GM12878 (cell line): ENCODE measurements at regions of chr19 and their contacts with region 1.

Region 1: GRCh38 chr19:14366498-14366915 is 14.7 kb upstream of the ADGRE5 start:
- DNase-seq: peak; percentile 98
- ATAC-seq: peak; percentile 63
- H3K4me3 ChIP-seq: no peak overlapping the region
- H3K27ac ChIP-seq: peak overlapping the region; percentile 36; the same call in 1 of the 2 replicates
- H3K4me1 ChIP-seq: peaks cover 59% of the 10 kb centered on the region
- H3K27me3 ChIP-seq: no peaks in the 10 kb centered on the region
- CTCF ChIP-seq: no peak
- EP300 ChIP-seq: no peak
- POLR2A ChIP-seq: peak; percentile 48; the same call in 1 of the 2 replicates
- RAD21 ChIP-seq: no peak

Region 2: DNA sequence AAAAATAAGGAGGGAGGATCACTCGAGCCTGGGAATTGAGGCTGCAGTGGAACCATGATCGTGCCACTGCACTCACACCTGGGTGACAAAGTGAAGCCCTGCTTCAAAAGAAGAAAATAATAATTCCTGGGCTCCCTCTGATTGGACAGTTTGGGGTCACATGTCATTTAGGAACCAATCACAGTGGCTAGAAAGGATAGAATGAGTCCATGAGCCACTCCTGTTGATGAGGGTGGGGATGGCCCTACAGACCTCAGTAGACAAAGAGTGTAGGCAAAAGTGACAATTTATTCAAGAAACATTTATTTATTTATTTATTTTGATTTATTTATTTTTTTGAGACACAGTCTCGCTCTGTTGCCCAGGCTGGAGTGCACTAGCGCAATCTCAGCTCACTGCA is 12.1 kb before region 1 on chr19:
- CTCF ChIA-PET with region 1: interaction called, 46 read pairs
- POLR2A ChIA-PET with region 1: interaction called, 9 read pairs
- RAD21 ChIA-PET with region 1: interaction called, 4 read pairs
- SMC1A ChIA-PET with region 1: interaction called, 13 read pairs
- in situ Hi-C with region 1: no loop called
- intact Hi-C with region 1: no loop called
- DNase-seq: no peak
- ATAC-seq: peak; percentile 60
- H3K4me3 ChIP-seq: no peak overlapping the region
- H3K27ac ChIP-seq: no peak overlapping the region
- H3K4me1 ChIP-seq: peaks cover 25% of the 10 kb centered on the region
- H3K27me3 ChIP-seq: no peaks in the 10 kb centered on the region
- CTCF ChIP-seq: no peak
- EP300 ChIP-seq: no peak
- POLR2A ChIP-seq: no peak
- RAD21 ChIP-seq: no peak

Region 3: GRCh38 chr19:14383661-14384555 is 17.4 kb after region 1 on chr19:
- CTCF ChIA-PET with region 1: interaction called, 80 read pairs
- POLR2A ChIA-PET with region 1: interaction called, 331 read pairs
- RAD21 ChIA-PET with region 1: interaction called, 270 read pairs
- SMC1A ChIA-PET with region 1: interaction called, 297 read pairs
- in situ Hi-C with region 1: no loop called
- intact Hi-C with region 1: loop called (anchors 1 kb)
- DNase-seq: no peak
- ATAC-seq: peak; percentile 60
- H3K4me3 ChIP-seq: peak overlapping the region; percentile 86
- H3K27ac ChIP-seq: peak overlapping the region; percentile 98
- H3K4me1 ChIP-seq: peaks cover 20% of the 10 kb centered on the region
- H3K27me3 ChIP-seq: no peaks in the 10 kb centered on the region
- CTCF ChIP-seq: no peak
- EP300 ChIP-seq: peak; percentile 55 to 70
- POLR2A ChIP-seq: peak; percentile 58; the same call in 1 of the 2 replicates
- RAD21 ChIP-seq: no peak

Region 4: GRCh38 chr19:14405758-14406644 is 39.5 kb after region 1 on chr19:
- CTCF ChIA-PET with region 1: interaction called, 125 read pairs
- POLR2A ChIA-PET with region 1: interaction called, 38 read pairs
- RAD21 ChIA-PET with region 1: interaction called, 94 read pairs
- SMC1A ChIA-PET with region 1: interaction called, 25 read pairs
- in situ Hi-C with region 1: no loop called
- intact Hi-C with region 1: loop called (anchors 2 kb)
- DNase-seq: peak; percentile 48
- ATAC-seq: peak; percentile 86
- H3K4me3 ChIP-seq: no peak overlapping the region
- H3K27ac ChIP-seq: no peak overlapping the region
- H3K4me1 ChIP-seq: peaks cover 3% of the 10 kb centered on the region; the same call in 1 of the 2 replicates
- H3K27me3 ChIP-seq: no peaks in the 10 kb centered on the region
- CTCF ChIP-seq: peak; percentile 66 to 94 (median 89)
- EP300 ChIP-seq: no peak
- POLR2A ChIP-seq: peak; percentile 57
- RAD21 ChIP-seq: peak; percentile 94